Panc1 (cell line): ENCODE measurements at regions of chr4 and their contacts with region 1.

Region 1: DNA sequence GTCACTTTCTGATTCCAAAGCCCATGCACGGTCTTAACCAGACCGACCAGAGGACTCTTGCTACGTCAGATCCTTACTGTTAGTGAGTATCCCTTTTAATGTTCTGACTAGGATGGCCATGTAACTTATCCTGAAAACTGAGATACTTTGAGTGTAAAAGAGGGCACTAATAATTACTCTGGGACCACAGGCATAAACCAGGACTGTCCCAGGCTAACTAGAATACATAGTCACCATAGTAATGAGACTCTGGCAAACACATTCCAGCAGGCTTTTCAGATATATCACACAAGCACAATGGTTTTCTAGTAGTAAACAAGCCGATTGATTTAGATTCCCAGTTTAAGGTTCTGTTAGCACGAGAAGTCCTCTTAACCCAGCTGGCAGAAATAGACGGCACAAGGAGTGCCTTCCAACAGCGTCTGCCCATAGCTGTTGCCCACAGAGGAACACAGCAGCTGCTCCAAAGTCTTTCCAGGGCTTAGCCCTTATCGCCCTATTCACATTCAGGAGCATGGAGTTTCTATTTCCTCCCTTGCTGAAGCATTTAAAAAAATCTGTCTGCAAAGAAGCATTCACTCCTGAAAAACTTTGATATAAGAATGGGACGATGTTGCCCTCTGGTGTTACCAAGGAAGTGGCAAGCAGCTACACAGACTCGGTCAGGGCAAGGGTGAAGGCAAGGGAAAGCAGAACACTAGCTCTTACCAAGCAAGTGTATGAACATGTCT is 92.4 kb downstream of the CXCL13 start:
- DNase-seq: peak; percentile 27
- ATAC-seq: peak; percentile 90
- H3K4me3 ChIP-seq: no peak overlapping the region
- H3K27ac ChIP-seq: no peak overlapping the region
- H3K4me1 ChIP-seq: no peaks in the 10 kb centered on the region
- H3K27me3 ChIP-seq: no peaks in the 10 kb centered on the region
- CTCF ChIP-seq: peak; percentile 65

Region 2: DNA sequence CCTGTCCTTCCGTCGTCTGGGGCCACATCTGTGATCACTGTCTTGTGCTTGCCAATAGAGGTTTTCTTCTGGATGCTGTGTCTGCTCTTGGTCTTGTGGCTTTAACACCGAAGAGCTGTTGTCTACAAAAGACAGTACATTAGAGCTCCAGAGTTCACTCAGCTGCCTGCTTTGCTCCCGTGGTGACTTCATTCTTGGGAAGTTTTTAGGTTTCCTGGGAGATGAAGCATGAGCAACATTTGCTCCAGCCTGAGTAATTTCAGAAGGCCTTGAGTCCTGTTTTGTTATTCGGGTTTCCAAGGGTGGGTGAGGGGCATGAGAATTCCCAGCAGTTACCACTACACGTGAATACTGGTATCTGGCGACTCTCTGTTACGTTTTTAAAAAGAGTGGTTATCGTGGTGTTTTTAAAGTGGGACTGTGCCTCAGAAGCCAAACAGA is 1073.8 kb before region 1 on chr4:
- CTCF ChIA-PET with region 1: no interaction called
- POLR2A ChIA-PET with region 1: no interaction called
- in situ Hi-C with region 1: no loop called
- intact Hi-C with region 1: no loop called
- DNase-seq: no peak
- ATAC-seq: no peak
- H3K4me3 ChIP-seq: no peak overlapping the region
- H3K27ac ChIP-seq: no peak overlapping the region
- H3K4me1 ChIP-seq: no peaks in the 10 kb centered on the region
- H3K27me3 ChIP-seq: no peaks in the 10 kb centered on the region
- CTCF ChIP-seq: no peak

Region 3: DNA sequence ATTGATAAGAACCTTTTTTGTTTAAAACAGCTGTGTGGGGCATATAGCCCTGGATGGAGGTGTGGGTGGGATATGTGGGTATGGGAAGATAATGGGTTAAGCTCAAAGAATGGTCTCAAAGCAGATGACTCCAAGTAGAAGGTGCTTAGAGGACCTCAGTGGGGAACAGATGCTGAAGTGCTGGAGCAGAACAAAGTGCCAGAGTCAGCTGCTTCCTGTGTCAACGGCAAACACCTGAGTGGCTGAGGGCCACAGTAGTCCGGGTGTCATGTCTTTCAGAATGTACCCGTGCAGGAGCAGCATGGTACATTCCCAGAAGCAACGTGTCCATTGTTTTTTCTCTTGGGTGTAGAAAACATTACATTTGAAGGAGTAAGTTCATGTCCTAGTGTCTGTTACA is 330.4 kb before region 1 on chr4:
- CTCF ChIA-PET with region 1: no interaction called
- POLR2A ChIA-PET with region 1: no interaction called
- in situ Hi-C with region 1: no loop called
- intact Hi-C with region 1: loop called (anchors 5 kb)
- DNase-seq: no peak
- ATAC-seq: no peak
- H3K4me3 ChIP-seq: no peak overlapping the region
- H3K27ac ChIP-seq: no peak overlapping the region
- H3K4me1 ChIP-seq: no peaks in the 10 kb centered on the region
- H3K27me3 ChIP-seq: no peaks in the 10 kb centered on the region
- CTCF ChIP-seq: no peak

Region 4: GRCh38 chr4:77629885-77630284 is 68.1 kb before region 1 on chr4:
- CTCF ChIA-PET with region 1: no interaction called
- POLR2A ChIA-PET with region 1: no interaction called
- in situ Hi-C with region 1: no loop called
- intact Hi-C with region 1: loop called (anchors 10 kb)
- DNase-seq: no peak
- ATAC-seq: no peak
- H3K4me3 ChIP-seq: no peak overlapping the region
- H3K27ac ChIP-seq: no peak overlapping the region
- H3K4me1 ChIP-seq: no peaks in the 10 kb centered on the region
- H3K27me3 ChIP-seq: no peaks in the 10 kb centered on the region
- CTCF ChIP-seq: no peak